Endothelial cell of umbilical vein (primary cell): ENCODE measurements at regions of chr6 and their contacts with region 1.

Region 1: GRCh38 chr6:2791124-2791974 is 26.2 kb downstream of the WRNIP1 start:
- DNase-seq: peak; percentile 92
- H3K4me3 ChIP-seq: no peak overlapping the region
- H3K27ac ChIP-seq: peak overlapping the region; percentile 25
- H3K4me1 ChIP-seq: peaks cover 5% of the 10 kb centered on the region
- H3K27me3 ChIP-seq: no peaks in the 10 kb centered on the region
- CTCF ChIP-seq: peak; percentile 71 to 79
- POLR2A ChIP-seq: no peak

Region 2: GRCh38 chr6:2432239-2432638 is 359.1 kb before region 1 on chr6:
- CTCF ChIA-PET with region 1: no interaction called
- POLR2A ChIA-PET with region 1: no interaction called
- dilution Hi-C with region 1: no loop called
- intact Hi-C with region 1: no loop called
- DNase-seq: no peak
- H3K4me3 ChIP-seq: no peak overlapping the region
- H3K27ac ChIP-seq: no peak overlapping the region
- H3K4me1 ChIP-seq: no peaks in the 10 kb centered on the region
- H3K27me3 ChIP-seq: no peaks in the 10 kb centered on the region
- CTCF ChIP-seq: no peak
- POLR2A ChIP-seq: no peak

Region 3: GRCh38 chr6:2634139-2634964 is 157.0 kb before region 1 on chr6:
- CTCF ChIA-PET with region 1: no interaction called
- POLR2A ChIA-PET with region 1: no interaction called
- dilution Hi-C with region 1: no loop called
- intact Hi-C with region 1: no loop called
- DNase-seq: peak; percentile 93
- H3K4me3 ChIP-seq: peak overlapping the region in 2 of 3 experiments; percentile 13 to 15
- H3K27ac ChIP-seq: peak overlapping the region; percentile 44
- H3K4me1 ChIP-seq: peaks cover 15% of the 10 kb centered on the region
- H3K27me3 ChIP-seq: no peaks in the 10 kb centered on the region
- CTCF ChIP-seq: peak; percentile 98 to 99
- POLR2A ChIP-seq: no peak

Region 4: DNA sequence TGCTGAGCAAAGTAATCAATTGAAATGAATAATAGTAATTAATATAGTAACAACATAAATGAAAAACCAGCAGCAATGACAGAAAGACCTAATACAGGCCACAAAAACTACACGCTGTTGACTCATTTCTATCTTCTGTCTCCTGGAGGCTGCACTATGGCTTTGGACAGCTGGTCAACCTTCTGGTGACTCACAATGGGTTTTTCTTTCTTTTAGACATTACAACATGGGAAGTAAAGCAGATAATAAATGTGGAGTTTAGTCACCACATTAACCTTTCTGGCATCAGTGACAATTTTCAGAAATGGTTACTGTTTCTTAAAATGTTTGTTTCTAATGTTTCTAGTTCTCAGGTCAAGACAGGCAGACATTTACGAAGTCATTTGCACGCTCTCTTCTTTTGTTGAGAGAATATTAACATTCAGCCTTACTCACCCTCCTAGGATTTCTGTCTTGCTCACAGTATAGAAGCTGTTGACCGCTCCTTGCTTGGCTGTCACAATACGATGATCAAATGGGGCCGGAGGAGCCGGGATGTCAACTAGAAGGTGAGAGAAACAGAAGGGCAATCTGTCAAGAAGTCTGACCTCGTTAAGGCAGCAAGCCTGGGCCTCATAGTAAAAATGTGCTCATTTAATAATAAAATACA is 102.8 kb before region 1 on chr6:
- CTCF ChIA-PET with region 1: no interaction called
- POLR2A ChIA-PET with region 1: no interaction called
- dilution Hi-C with region 1: no loop called
- intact Hi-C with region 1: no loop called
- DNase-seq: peak; percentile 24
- H3K4me3 ChIP-seq: no peak overlapping the region
- H3K27ac ChIP-seq: no peak overlapping the region
- H3K4me1 ChIP-seq: no peaks in the 10 kb centered on the region
- H3K27me3 ChIP-seq: no peaks in the 10 kb centered on the region
- CTCF ChIP-seq: no peak
- POLR2A ChIP-seq: no peak

Region 5: GRCh38 chr6:2818593-2818992 is 27.2 kb after region 1 on chr6:
- CTCF ChIA-PET with region 1: interaction called, 23 read pairs
- POLR2A ChIA-PET with region 1: interaction called, 6 read pairs
- dilution Hi-C with region 1: no loop called
- intact Hi-C with region 1: loop called (anchors 1 kb)
- DNase-seq: peak; percentile 88
- H3K4me3 ChIP-seq: peak overlapping the region in 1 of 3 experiments; percentile 28
- H3K27ac ChIP-seq: peak overlapping the region; percentile 92
- H3K4me1 ChIP-seq: peaks cover 44% of the 10 kb centered on the region
- H3K27me3 ChIP-seq: no peaks in the 10 kb centered on the region
- CTCF ChIP-seq: no peak
- POLR2A ChIP-seq: no peak

Region 6: GRCh38 chr6:2841264-2842138 is 50.2 kb after region 1 on chr6 and contains the start of gene SERPINB1:
- CTCF ChIA-PET with region 1: interaction called, 262 read pairs
- POLR2A ChIA-PET with region 1: interaction called, 3 read pairs
- dilution Hi-C with region 1: no loop called
- intact Hi-C with region 1: loop called (anchors 1 kb)
- DNase-seq: peak; percentile 88
- H3K4me3 ChIP-seq: peak within 1 kb of the TSS; percentile 33 to 44 (median 38)
- H3K27ac ChIP-seq: peak within 1 kb of the TSS; percentile 62
- H3K4me1 ChIP-seq: peaks cover 37% of the 10 kb centered on the region
- H3K27me3 ChIP-seq: no peaks in the 10 kb centered on the region
- CTCF ChIP-seq: no peak
- POLR2A ChIP-seq: no peak
- total RNA-seq, gene SERPINB1: 23.3 and 24.0 TPM in 2 replicates

Region 7: DNA sequence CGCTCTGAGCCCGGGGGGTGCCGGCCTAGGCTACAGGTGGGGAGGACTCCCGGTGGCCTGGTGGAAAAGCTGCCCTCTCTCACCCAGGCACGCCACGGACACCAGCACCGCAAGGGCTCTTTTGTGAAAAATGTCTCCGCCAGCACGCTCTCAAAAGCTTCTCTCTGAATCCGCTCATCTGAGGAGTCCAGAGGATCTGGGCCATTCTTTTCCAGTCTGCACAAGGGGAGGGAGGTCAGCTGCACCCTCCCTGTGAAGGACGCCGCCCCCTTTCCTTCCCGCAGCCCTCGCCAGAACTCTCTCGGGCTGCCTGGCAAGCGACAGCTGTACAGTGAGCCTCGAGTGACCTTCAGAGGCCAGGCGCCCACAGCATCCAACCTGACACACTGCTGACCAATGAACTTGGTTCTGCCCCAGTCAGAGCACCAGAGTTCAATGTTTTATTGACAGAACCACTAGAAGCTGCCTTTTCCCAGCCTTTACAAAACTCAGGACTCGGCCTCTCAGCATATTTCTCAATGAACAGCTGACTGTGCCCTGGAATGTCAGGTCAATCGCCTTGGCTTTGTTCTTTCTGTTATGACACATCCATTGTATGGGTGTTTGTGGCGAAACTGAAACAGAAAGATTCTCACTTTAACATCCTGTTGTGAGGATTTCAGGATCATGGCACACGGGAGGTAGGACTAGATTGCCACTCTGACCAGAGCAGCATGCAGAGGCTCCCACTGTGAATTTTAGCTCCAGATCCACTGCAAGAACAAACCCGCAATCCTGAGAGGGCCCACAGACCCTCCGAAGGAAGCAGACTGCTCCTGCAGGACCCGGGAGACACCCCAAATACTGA is 85.1 kb after region 1 on chr6:
- CTCF ChIA-PET with region 1: interaction called, 19 read pairs
- POLR2A ChIA-PET with region 1: no interaction called
- dilution Hi-C with region 1: no loop called
- intact Hi-C with region 1: no loop called
- DNase-seq: peak; percentile 98
- H3K4me3 ChIP-seq: peak overlapping the region in 2 of 3 experiments; percentile 28 to 53
- H3K27ac ChIP-seq: peak overlapping the region; percentile 91
- H3K4me1 ChIP-seq: peaks cover 29% of the 10 kb centered on the region
- H3K27me3 ChIP-seq: no peaks in the 10 kb centered on the region
- CTCF ChIP-seq: no peak
- POLR2A ChIP-seq: peak; percentile 55

Region 8: GRCh38 chr6:2931970-2932748 is 140.8 kb after region 1 on chr6:
- CTCF ChIA-PET with region 1: interaction called, 98 read pairs
- POLR2A ChIA-PET with region 1: no interaction called
- dilution Hi-C with region 1: no loop called
- intact Hi-C with region 1: loop called (anchors 1 kb)
- DNase-seq: peak; percentile 84
- H3K4me3 ChIP-seq: no peak overlapping the region
- H3K27ac ChIP-seq: no peak overlapping the region
- H3K4me1 ChIP-seq: peaks cover 2% of the 10 kb centered on the region
- H3K27me3 ChIP-seq: no peaks in the 10 kb centered on the region
- CTCF ChIP-seq: peak; percentile 93 to 96
- POLR2A ChIP-seq: no peak